Activated naive CD4-positive, alpha-beta T cell treated with anti-CD3 and anti-CD28 coated beads for 36 hours (primary cell): ENCODE measurements at regions of chr12 and their contacts with region 1.

Region 1: GRCh38 chr12:120228291-120229070 is 27.6 kb upstream of the RPLP0 start:
- DNase-seq: peak; percentile 96
- H3K4me3 Mint-ChIP-seq: peak overlapping the region; percentile 49
- H3K27ac Mint-ChIP-seq: peak overlapping the region; percentile 84
- H3K4me1 Mint-ChIP-seq: peaks cover 88% of the 10 kb centered on the region
- H3K27me3 Mint-ChIP-seq: no peaks in the 10 kb centered on the region

Region 2: DNA sequence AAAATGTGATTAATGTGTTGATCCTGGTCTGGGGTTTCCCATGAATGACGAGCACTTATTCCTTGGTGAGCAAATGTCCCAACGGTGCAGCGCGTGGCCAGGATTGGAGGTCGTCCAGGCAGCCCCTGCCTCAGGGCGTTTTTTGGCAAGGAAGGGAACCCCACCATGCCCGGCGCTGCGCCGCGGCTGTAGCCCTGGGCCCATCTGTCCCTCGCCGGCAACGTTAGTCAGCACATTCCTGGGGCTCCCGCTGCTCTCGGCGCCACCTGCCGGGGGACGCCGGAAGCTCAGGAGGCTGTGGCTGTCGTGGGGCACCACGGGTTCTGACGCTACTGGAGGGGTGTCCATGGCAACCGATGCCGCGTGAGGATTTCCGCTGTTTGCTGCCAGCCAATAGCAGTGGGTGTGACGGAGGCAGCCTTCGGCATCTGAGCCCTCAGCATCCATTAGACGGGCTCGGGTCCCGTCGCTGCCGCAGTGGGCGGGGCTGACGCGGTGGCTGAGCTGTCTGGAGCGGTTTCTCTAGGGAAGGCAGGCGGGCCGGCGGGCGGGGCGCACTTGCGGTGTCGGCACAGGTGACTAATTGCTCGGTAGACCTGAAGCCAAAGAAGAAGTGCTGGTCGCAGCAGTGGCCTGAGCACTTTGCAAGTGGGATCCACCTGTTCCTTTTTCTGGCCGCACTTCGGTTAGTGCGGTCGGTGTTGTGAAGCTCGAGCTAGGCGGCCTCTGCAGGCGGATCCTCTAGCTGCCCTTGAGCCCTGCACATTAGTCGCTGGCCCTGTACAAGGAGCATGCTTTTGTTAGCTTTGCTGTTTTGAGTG is 141.5 kb before region 1 on chr12:
- CTCF ChIA-PET with region 1: no interaction called
- intact Hi-C with region 1: loop called (anchors 1 kb)
- DNase-seq: peak; percentile 100
- H3K4me3 Mint-ChIP-seq: peak overlapping the region; percentile 63
- H3K27ac Mint-ChIP-seq: peak overlapping the region; percentile 85
- H3K4me1 Mint-ChIP-seq: peaks cover 41% of the 10 kb centered on the region
- H3K27me3 Mint-ChIP-seq: no peaks in the 10 kb centered on the region

Region 3: DNA sequence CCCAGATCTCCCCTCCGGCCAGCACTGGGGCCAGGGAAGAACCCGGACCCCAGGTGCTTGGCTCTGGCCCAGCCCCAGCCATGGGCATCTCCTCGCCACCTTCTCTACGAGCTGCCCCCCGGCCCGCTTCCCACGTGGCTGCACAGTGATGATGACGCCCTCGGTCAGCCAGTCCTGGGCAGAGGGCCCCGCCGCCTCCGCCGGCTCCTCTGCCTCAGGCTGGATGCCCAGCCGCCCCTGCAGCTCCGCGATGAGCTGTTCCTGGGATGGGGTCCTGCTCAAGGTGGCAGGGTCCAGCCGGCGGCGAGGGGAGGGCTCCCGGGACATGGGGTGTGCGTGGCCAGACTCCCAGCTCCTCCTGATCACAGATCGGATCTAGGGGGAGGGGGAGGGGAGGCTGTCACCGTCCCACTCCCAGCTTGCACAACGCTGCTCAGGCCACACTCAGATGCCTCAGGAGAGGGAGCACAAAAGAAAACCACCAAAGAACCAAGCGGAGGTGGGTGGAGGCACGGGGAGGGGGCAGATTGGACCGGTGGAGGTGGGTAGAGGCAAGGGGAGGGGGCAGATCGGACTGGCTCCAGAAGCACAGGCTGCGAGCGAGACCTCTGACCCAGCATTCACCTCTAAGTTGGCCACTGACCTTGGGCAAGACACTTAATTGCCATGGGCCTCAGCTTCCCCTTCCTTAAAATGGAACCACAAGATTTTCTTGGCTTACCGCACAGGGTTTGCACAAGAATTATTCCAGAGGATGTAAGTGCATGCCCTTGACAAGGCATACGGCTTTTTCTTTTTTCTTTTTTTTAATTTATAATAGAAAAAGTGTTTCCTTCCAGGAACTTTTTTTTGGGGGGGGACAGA is 11.5 kb before region 1 on chr12:
- CTCF ChIA-PET with region 1: interaction called, 17 read pairs
- intact Hi-C with region 1: no loop called
- DNase-seq: no peak
- H3K4me3 Mint-ChIP-seq: no peak overlapping the region
- H3K27ac Mint-ChIP-seq: no peak overlapping the region
- H3K4me1 Mint-ChIP-seq: no peaks in the 10 kb centered on the region
- H3K27me3 Mint-ChIP-seq: no peaks in the 10 kb centered on the region

Region 4: GRCh38 chr12:120265473-120266179 is 37.1 kb after region 1 on chr12 and contains the start of gene PXN:
- CTCF ChIA-PET with region 1: interaction called, 637 read pairs
- intact Hi-C with region 1: loop called (anchors 1 kb)
- DNase-seq: peak; percentile 90
- H3K4me3 Mint-ChIP-seq: peak within 1 kb of the TSS; percentile 89
- H3K27ac Mint-ChIP-seq: peak within 1 kb of the TSS; percentile 87
- H3K4me1 Mint-ChIP-seq: peaks cover 44% of the 10 kb centered on the region
- H3K27me3 Mint-ChIP-seq: no peaks in the 10 kb centered on the region
- total RNA-seq, gene PXN: 109 to 112 TPM

Region 5: GRCh38 chr12:120286796-120287465 is 58.5 kb after region 1 on chr12:
- CTCF ChIA-PET with region 1: interaction called, 48 read pairs
- intact Hi-C with region 1: loop called (anchors 1 kb)
- DNase-seq: no peak
- H3K4me3 Mint-ChIP-seq: no peak overlapping the region
- H3K27ac Mint-ChIP-seq: no peak overlapping the region
- H3K4me1 Mint-ChIP-seq: peaks cover 6% of the 10 kb centered on the region
- H3K27me3 Mint-ChIP-seq: no peaks in the 10 kb centered on the region

Region 6: GRCh38 chr12:120301962-120302815 is 73.7 kb after region 1 on chr12 and contains the start of gene SIRT4:
- CTCF ChIA-PET with region 1: interaction called, 10 read pairs
- intact Hi-C with region 1: no loop called
- DNase-seq: peak; percentile 96
- H3K4me3 Mint-ChIP-seq: peak within 1 kb of the TSS; percentile 100
- H3K27ac Mint-ChIP-seq: peak within 1 kb of the TSS; percentile 83
- H3K4me1 Mint-ChIP-seq: peaks cover 7% of the 10 kb centered on the region
- H3K27me3 Mint-ChIP-seq: no peaks in the 10 kb centered on the region
- total RNA-seq, gene SIRT4: 2.0 to 3.7 TPM

Region 7: DNA sequence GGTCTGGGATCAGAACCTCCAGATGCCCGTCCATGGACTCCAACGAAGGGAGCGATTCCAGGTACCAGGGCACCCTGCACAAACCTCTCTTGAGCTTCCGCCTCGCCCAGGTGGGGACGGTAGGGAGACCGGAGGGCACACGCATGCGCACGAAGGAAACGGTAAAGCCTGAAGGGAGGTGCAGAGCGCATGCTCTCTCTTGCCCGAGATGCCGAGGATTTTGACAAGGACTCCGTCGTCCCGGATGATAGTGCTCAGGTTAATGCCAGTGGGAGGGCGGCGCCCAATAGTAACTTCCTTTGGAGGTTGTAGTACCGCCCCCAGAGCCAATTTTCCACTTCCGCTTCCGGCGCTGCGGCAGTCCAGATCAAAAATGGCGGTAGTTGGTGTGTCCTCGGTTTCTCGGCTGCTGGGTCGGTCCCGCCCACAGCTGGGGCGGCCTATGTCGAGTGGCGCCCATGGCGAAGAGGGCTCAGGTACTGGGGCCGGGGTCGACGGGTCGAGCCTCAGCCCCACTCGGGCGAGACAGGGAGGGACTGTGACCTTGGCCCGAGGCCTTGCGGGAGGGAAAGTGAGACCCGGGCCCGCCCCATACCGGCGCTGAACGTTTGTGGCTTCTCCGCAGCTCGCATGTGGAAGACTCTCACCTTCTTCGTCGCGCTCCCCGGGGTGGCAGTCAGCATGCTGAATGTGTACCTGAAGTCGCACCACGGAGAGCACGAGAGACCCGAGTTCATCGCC is 209.4 kb after region 1 on chr12 and contains the start of gene COX6A1:
- CTCF ChIA-PET with region 1: interaction called, 3 read pairs
- intact Hi-C with region 1: loop called (anchors 10 kb)
- DNase-seq: peak; percentile 99
- H3K4me3 Mint-ChIP-seq: peak within 1 kb of the TSS; percentile 92
- H3K27ac Mint-ChIP-seq: peak within 1 kb of the TSS; percentile 93
- H3K4me1 Mint-ChIP-seq: peaks cover 22% of the 10 kb centered on the region
- H3K27me3 Mint-ChIP-seq: no peaks in the 10 kb centered on the region
- total RNA-seq, gene COX6A1: 536 to 540 TPM

Region 8: DNA sequence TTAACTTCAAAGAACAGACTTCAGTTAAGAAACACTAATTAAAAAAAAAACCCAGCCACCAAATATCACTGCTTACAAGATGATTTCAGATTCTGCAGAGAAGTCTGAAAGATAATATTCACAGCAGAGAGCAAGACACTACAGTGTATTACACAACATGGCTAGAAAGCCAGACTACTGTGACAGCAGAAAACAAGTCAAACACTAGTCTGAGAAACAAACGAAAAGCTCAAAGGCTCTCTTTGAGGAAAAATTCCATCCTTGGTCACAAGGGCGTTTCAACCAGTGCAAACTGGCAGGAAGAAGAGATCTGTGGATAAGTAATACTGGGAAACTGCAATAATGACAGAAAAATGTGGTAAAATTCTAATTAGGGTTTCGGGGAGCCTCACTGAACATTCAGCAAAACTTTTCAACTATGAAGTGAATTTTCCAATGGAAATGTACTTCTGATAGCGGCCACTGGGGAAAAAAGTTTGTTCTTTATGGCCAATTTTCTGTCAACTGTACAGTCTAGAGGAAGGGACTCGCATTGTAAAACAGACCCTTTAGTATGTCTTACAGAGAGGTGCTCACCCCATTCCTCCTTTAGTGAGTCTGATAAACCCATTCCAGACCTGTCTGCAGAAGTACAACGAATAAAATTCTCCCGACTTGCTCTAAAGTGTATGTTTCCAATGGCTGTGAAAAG is 547.5 kb after region 1 on chr12:
- CTCF ChIA-PET with region 1: no interaction called
- intact Hi-C with region 1: no loop called
- DNase-seq: no peak
- H3K4me3 Mint-ChIP-seq: no peak overlapping the region
- H3K27ac Mint-ChIP-seq: peak overlapping the region; percentile 1
- H3K4me1 Mint-ChIP-seq: peaks cover 25% of the 10 kb centered on the region
- H3K27me3 Mint-ChIP-seq: no peaks in the 10 kb centered on the region